BJ (cell line): ENCODE measurements at regions of chr1 and their contacts with region 1.

Region 1: DNA sequence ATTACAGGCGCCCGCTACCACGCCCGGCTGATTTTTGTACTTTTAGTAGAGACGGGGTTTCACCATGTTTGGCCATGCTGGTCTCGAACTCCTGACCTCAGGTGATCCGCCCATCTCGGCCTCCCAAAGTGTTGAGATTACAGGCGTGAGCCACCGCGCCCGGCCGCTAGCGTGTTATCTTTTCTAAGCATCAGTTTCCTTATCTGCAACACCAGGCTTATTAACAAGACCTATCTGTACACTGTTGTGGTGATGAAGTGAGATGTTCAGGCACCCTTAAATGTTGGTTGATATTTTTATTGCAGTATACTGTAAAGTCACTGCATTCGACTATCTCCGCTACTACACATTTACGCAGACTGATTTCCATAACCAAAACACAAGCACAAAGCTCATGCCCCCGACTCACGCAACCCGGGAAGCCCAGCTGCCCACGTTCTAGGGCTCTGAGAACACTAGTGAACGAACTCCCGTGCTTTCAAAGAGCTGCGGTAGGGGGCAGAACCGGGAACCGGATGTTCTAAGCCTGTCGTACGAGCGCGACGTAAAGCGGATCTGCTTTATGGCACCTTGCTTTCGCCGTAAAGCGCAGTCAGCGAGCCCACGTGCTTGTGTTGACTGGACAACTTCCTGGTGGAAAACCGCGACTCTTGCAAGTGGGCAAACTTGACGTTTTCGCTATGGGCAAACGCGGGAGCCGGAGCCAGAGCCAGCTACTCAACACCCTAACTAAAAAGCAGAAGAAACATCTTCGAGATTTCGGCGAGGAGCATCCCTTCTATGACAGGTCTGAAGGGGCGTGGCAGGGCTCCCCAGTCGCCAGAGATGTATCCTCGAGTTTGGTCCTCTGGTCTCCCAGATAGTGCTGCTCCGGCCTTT is at the start of gene UTP25:
- DNase-seq: peak; percentile 81
- H3K4me3 ChIP-seq: peak within 1 kb of the TSS; percentile 72
- H3K27me3 ChIP-seq: no peaks in the 10 kb centered on the region
- CTCF ChIP-seq: peak; percentile 83
- polyA plus RNA-seq, gene UTP25: 6.8 and 9.8 TPM in 2 replicates

Region 2: DNA sequence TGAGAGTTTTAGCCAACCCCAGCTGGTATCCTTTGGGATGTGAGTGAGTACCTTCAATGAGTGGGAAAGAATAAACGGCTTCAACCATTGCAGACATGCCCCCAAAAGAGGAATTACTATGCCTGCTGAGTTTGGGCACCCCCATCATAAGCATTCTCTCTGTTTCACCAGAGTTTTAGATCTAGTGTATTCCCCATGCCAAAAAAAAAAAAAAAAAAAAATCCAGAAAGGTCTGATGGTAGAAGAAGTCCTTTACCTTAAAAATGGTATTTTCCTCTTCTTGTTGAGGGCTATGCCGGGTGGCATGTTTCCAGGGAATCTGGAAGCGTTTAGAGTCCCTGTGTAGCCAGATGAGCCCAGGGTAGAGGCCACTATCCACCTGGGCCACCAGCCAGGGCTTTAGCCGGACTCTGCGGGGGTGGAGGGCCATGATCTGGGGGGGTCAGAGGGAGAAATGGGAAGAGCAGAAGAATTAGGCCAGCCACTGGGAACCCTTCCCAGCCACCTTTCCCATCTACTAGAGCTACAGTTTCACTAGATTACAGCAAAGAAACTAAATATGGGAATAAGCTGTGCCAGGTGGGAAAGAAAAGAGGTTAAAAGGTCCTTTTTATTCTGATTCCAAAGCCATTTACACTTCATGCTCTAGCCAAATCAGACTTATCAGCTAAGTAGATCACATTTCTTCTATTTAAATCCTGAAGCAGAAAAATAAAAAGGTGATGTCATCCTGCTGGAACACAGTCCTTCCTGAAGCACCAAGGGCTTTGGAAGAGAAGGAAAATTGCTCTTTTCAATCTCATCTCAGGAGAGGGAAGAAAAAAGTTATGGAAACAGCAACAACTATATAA is 26.4 kb before region 1 on chr1:
- CTCF ChIA-PET with region 1: interaction called, 14 read pairs
- POLR2A ChIA-PET with region 1: no interaction called
- DNase-seq: no peak
- H3K4me3 ChIP-seq: no peak overlapping the region
- H3K27me3 ChIP-seq: no peaks in the 10 kb centered on the region; the same call in 1 of the 2 replicates
- CTCF ChIP-seq: no peak

Region 3: DNA sequence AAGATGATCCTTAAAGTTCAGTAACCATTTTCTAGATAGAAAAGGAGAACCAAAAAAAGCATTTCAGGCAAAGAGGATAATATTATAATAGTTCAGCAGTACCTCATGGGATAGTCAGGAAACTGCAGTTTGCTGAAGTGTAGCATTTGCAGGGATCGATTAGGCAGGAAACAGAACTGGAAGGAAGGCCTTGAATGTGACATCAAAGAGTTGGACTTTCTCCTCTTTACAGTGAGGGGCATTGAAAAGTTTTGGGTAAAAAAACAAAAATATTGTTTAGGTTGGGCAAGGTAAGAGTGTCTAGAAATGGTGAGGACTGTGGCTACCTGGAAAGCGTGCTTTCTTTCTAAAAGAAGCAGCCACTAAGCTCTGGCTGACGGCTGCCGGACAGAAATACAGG is 13.7 kb before region 1 on chr1:
- CTCF ChIA-PET with region 1: interaction called, 27 read pairs
- POLR2A ChIA-PET with region 1: no interaction called
- DNase-seq: no peak
- H3K4me3 ChIP-seq: no peak overlapping the region
- H3K27me3 ChIP-seq: no peaks in the 10 kb centered on the region
- CTCF ChIP-seq: no peak

Region 4: DNA sequence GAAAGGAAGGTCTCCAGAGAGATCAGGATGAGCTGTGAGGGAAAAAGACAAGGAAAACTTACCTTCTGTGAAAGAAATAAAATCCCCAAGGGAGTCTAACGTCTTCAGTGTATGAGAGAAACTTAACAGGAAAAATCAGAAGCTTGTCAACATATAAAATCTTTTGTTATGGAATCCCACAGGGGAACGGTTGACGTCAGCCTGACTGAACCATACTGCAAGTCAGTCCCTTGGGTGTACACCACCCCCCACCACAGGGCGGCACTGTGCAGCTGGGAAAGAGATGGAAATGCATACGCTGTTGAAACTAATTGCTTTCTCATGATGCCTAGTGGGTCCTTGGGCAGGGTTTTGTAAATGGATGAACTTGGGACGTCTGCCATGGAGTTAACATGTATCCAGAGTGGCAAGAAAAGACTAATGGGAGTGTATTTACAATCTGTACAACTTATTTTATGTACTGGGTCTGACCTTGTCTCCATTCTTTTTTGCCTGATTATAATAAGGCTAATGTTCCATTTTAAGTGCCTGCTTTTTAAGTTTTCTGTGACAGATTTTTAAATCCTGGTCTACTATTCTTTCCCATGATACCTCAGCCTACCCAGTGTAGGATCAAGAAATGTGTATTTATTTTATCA is 22.8 kb after region 1 on chr1:
- CTCF ChIA-PET with region 1: interaction called, 17 read pairs
- POLR2A ChIA-PET with region 1: interaction called, 8 read pairs
- DNase-seq: no peak
- H3K4me3 ChIP-seq: no peak overlapping the region
- H3K27me3 ChIP-seq: no peaks in the 10 kb centered on the region
- CTCF ChIP-seq: peak; percentile 81

Region 5: GRCh38 chr1:209989525-209989924 is 161.9 kb after region 1 on chr1:
- CTCF ChIA-PET with region 1: interaction called, 10 read pairs
- POLR2A ChIA-PET with region 1: no interaction called
- DNase-seq: peak; percentile 1
- H3K4me3 ChIP-seq: no peak overlapping the region
- H3K27me3 ChIP-seq: no peaks in the 10 kb centered on the region
- CTCF ChIP-seq: no peak

Region 6: DNA sequence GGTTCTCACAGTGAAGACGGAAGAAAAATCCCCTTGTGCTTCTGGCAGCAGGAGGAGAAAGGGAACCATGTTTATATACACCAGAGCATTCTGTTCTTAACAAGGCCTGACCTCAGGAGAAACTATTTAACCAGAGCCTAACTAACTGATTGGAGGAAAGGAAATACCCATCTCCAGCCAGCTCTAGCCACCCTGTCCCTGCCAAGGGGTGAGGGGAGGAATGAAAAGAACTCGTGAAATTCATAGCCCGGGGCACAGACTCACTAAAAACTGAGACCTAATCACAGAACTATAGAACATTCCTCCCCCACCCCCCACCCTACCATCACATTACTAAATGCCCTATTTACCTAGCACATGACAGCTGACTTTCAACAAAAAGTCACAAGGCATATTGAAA is 1241.4 kb after region 1 on chr1:
- CTCF ChIA-PET with region 1: no interaction called
- POLR2A ChIA-PET with region 1: no interaction called
- DNase-seq: peak; percentile 6
- H3K4me3 ChIP-seq: no peak overlapping the region
- H3K27me3 ChIP-seq: no peaks in the 10 kb centered on the region
- CTCF ChIP-seq: no peak